PC-3 (cell line): ENCODE measurements at regions of chr2 and their contacts with region 1.

Region 1: GRCh38 chr2:191869178-191869577 is 22.3 kb upstream of the CAVIN2 start:
- DNase-seq: peak; percentile 92
- ATAC-seq: peak; percentile 86
- H3K4me3 ChIP-seq: no peak overlapping the region
- H3K27ac ChIP-seq: peak overlapping the region; percentile 53
- H3K4me1 ChIP-seq: peaks cover 37% of the 10 kb centered on the region
- H3K27me3 ChIP-seq: no peaks in the 10 kb centered on the region
- CTCF ChIP-seq: peak; percentile 91

Region 2: GRCh38 chr2:190979906-190980629 is 889.1 kb before region 1 on chr2:
- CTCF ChIA-PET with region 1: no interaction called
- POLR2A ChIA-PET with region 1: no interaction called
- intact Hi-C with region 1: no loop called
- DNase-seq: peak; percentile 62
- ATAC-seq: peak; percentile 36
- H3K4me3 ChIP-seq: peak overlapping the region; percentile 21; the same call in 1 of the 2 replicates
- H3K27ac ChIP-seq: peak overlapping the region; percentile 61
- H3K4me1 ChIP-seq: peaks cover 43% of the 10 kb centered on the region
- H3K27me3 ChIP-seq: no peaks in the 10 kb centered on the region
- CTCF ChIP-seq: no peak

Region 3: DNA sequence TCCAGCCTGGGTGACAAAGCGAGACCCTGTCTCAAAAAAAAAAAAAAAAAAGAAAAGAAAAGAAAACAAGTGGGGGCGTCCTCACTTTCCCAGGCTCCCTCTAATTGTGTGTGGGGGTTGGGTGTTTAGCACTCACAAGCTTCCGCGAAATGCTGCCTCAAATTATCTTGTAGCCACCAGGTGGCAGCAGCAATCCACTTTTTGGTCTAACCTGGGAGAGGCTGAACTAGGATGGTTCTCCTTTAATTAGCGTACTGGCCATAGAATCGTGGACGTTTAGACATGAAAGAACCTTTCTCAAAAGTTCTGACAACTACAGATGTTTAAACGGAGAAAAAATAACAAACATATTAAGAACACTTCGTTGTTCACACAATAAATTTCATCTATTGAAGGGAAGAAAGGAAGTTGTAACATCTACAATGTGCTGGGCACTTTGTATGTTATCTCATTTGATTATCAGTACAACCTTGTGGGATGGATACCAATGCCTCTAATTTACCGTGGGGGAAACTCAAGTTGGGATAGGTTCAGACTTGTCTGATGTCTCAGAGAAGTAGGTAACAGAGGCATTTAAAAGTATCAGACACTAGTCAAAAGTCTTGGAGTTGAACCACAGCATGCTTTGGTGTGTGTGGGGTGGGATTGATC is 314.0 kb before region 1 on chr2:
- CTCF ChIA-PET with region 1: interaction called, 3 read pairs
- POLR2A ChIA-PET with region 1: no interaction called
- intact Hi-C with region 1: loop called (anchors 2 kb)
- DNase-seq: peak; percentile 94
- ATAC-seq: peak; percentile 97
- H3K4me3 ChIP-seq: no peak overlapping the region
- H3K27ac ChIP-seq: no peak overlapping the region
- H3K4me1 ChIP-seq: no peaks in the 10 kb centered on the region
- H3K27me3 ChIP-seq: no peaks in the 10 kb centered on the region
- CTCF ChIP-seq: peak; percentile 86

Region 4: GRCh38 chr2:191811807-191812602 is 57.2 kb before region 1 on chr2:
- CTCF ChIA-PET with region 1: interaction called, 29 read pairs
- POLR2A ChIA-PET with region 1: no interaction called
- intact Hi-C with region 1: loop called (anchors 1 kb)
- DNase-seq: peak; percentile 85
- ATAC-seq: peak; percentile 93
- H3K4me3 ChIP-seq: no peak overlapping the region
- H3K27ac ChIP-seq: no peak overlapping the region
- H3K4me1 ChIP-seq: no peaks in the 10 kb centered on the region
- H3K27me3 ChIP-seq: no peaks in the 10 kb centered on the region
- CTCF ChIP-seq: peak; percentile 91

Region 5: DNA sequence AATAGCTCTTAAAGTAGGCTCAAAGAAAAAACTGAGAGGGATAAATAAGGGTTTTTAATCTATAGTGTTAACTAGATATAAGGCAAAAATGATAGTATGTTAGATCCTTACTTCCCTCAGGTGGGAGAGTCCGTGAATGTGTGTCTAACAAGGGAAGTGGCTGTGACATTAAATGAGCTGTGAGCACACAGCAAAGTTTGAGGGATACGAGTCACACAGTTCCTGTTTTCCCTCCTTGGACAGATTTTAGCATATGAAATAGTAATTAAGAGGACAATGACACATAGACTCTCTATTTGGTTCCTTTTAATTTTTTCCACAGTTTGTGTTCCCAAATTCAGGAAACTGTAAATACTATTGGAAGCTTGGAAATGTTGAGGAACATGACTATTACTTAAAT is 126.1 kb after region 1 on chr2:
- CTCF ChIA-PET with region 1: no interaction called
- POLR2A ChIA-PET with region 1: no interaction called
- intact Hi-C with region 1: loop called (anchors 5 kb)
- DNase-seq: peak; percentile 20
- ATAC-seq: peak; percentile 54
- H3K4me3 ChIP-seq: no peak overlapping the region
- H3K27ac ChIP-seq: no peak overlapping the region
- H3K4me1 ChIP-seq: peaks cover 5% of the 10 kb centered on the region
- H3K27me3 ChIP-seq: no peaks in the 10 kb centered on the region
- CTCF ChIP-seq: no peak

Region 6: GRCh38 chr2:192162392-192163042 is 293.3 kb after region 1 on chr2:
- CTCF ChIA-PET with region 1: interaction called, 74 read pairs
- POLR2A ChIA-PET with region 1: no interaction called
- intact Hi-C with region 1: loop called (anchors 1 kb)
- DNase-seq: peak; percentile 87
- ATAC-seq: peak; percentile 92
- H3K4me3 ChIP-seq: no peak overlapping the region
- H3K27ac ChIP-seq: no peak overlapping the region
- H3K4me1 ChIP-seq: peaks cover 5% of the 10 kb centered on the region; the same call in 1 of the 2 replicates
- H3K27me3 ChIP-seq: 0 out of 2 replicates have a peak, but pooled peaks cover 1% of the 10 kb centered on the region
- CTCF ChIP-seq: peak; percentile 97